ENCODE measurements at regions of chr20 and their contacts with region 1.

Region 1: GRCh38 chr20:62776692-62777527 is 19.4 kb upstream of the MRGBP start:
- DNase-seq: no peak

Region 2: DNA sequence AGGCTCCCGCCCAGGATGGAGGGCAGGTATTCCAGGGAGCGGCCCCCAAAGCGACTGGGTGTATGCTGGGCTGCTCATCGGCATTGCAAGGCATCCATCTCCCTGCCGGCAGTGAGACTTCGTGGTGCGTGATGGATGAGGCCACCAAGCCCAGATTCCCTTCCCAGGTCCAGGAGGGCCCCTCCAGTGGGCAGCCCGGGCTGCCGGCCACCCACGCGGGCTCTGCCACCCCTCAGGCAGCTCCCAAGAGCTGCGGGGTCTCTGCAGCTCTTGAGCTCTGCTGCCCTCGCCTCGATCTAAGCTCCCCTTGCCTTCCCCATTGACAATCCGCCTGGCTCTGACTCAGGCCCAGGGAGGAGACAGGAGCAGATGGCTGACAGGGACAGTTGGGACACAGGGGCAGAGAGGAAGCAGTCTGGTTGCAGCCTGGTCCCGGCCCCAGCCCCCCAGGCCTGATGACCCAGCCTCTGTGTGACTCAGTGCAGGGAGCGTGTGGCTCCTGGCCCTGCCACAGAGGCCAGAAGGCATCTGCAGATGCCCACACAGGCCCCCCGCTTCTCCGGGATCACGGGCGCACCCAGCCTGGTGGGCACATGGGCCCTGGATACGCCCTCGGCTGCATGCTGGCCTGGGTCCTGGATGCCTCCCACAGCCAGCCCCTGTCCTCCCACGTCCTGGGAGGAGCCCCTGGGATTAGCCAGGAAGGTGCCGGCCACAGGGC is 101.6 kb before region 1 on chr20:
- intact Hi-C with region 1: loop called in 1 of 2 experiments (anchors 10 kb)
- DNase-seq: no peak

Region 3: GRCh38 chr20:62808211-62808865 is 31.4 kb after region 1 on chr20:
- intact Hi-C with region 1: no loop called
- DNase-seq: peak; percentile 92